ENCODE measurements at regions of chr10 and their contacts with region 1.

Region 1: GRCh38 chr10:73886085-73886529 is 11.8 kb upstream of the CAMK2G start:
- DNase-seq: peak; percentile 88
- H3K4me3 Mint-ChIP-seq: no peak overlapping the region
- H3K27ac Mint-ChIP-seq: peak overlapping the region; percentile 95
- H3K4me1 Mint-ChIP-seq: peaks cover 40% of the 10 kb centered on the region
- H3K27me3 Mint-ChIP-seq: no peaks in the 10 kb centered on the region
- CTCF ChIP-seq: peak; percentile 86

Region 2: DNA sequence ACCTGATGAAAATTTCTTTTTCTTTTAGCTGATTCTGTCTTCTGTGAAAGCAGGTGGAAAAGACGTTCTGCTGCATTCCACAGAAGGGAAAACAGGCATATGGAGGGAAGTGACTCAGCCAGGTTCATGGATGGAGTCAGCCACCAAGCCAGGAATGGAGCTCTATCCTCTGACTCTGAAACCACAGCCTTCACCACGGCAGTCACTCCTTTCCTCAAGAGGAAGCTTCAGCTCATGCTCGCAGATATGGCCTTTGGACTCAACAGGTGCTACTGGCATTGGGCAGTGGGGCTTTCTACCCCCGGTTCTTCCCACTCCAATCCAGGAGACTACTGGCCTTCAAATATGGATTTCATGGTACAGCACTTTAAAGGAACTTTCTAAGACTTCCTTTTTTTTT is 13.3 kb after region 1 on chr10:
- CTCF ChIA-PET with region 1: interaction called, 63 read pairs
- intact Hi-C with region 1: loop called (anchors 1 kb)
- DNase-seq: peak; percentile 86
- H3K4me3 Mint-ChIP-seq: peak overlapping the region; percentile 36
- H3K27ac Mint-ChIP-seq: peak overlapping the region; percentile 96
- H3K4me1 Mint-ChIP-seq: peaks cover 53% of the 10 kb centered on the region
- H3K27me3 Mint-ChIP-seq: no peaks in the 10 kb centered on the region
- CTCF ChIP-seq: no peak

Region 3: GRCh38 chr10:73931767-73932619 is 45.9 kb after region 1 on chr10:
- CTCF ChIA-PET with region 1: interaction called, 38 read pairs
- intact Hi-C with region 1: loop called (anchors 2 kb)
- DNase-seq: peak; percentile 94
- H3K4me3 Mint-ChIP-seq: peak overlapping the region; percentile 20
- H3K27ac Mint-ChIP-seq: peak overlapping the region; percentile 99
- H3K4me1 Mint-ChIP-seq: peaks cover 68% of the 10 kb centered on the region
- H3K27me3 Mint-ChIP-seq: no peaks in the 10 kb centered on the region
- CTCF ChIP-seq: no peak

Region 4: DNA sequence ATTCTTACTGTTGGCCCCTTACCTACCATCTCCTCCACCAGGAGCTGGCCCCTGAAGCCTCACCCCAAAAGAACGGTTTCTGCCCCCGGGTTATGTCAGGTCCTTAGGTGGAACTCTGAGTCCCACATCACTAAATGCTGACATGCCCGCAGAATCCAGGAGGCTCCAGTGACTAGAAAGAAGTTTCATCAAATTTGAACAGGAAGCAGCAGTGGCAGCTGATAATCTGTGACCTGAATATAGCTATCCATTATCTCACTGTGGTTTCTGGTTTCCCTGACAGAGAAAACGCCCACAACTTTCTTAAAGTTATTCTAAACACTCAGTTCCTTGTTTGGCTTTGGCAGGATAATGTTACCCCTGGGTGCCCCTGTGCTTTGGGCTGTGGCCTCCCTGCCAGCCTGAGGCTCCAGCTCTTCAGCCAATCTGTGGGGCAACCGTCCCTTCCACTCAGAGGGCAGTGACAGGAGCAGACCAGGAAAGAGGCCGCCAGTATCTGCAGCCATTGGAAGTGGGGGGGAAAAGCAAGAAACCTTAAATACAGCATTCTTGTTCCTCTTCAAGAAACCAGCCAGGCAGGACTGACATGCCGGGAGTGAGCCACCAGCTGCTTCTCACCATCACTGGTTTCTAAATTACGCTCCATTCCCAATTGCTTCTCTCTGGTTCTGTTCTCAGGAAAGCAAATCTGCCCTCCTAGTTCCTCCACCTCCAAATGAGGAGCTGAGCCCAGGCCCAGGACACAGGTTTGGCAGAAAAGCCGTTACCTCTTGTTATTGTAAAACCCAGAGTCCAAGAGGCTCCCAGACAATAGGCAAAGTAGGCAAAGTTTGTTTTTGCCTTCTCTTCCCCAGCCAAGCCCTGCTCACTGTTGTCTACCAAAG is 70.6 kb after region 1 on chr10:
- CTCF ChIA-PET with region 1: interaction called, 27 read pairs
- intact Hi-C with region 1: no loop called
- DNase-seq: peak; percentile 77
- H3K4me3 Mint-ChIP-seq: peak overlapping the region; percentile 23
- H3K27ac Mint-ChIP-seq: peak overlapping the region; percentile 48
- H3K4me1 Mint-ChIP-seq: peaks cover 39% of the 10 kb centered on the region
- H3K27me3 Mint-ChIP-seq: no peaks in the 10 kb centered on the region
- CTCF ChIP-seq: no peak

Region 5: GRCh38 chr10:74058658-74059057 is 172.6 kb after region 1 on chr10:
- CTCF ChIA-PET with region 1: interaction called, 10 read pairs
- intact Hi-C with region 1: loop called (anchors 5 kb)
- DNase-seq: peak; percentile 46
- H3K4me3 Mint-ChIP-seq: peak overlapping the region; percentile 19
- H3K27ac Mint-ChIP-seq: peak overlapping the region; percentile 94
- H3K4me1 Mint-ChIP-seq: peaks cover 62% of the 10 kb centered on the region
- H3K27me3 Mint-ChIP-seq: no peaks in the 10 kb centered on the region
- CTCF ChIP-seq: no peak

Region 6: GRCh38 chr10:74081192-74081803 is 195.2 kb after region 1 on chr10:
- CTCF ChIA-PET with region 1: interaction called, 13 read pairs
- intact Hi-C with region 1: loop called (anchors 1 kb)
- DNase-seq: peak; percentile 69
- H3K4me3 Mint-ChIP-seq: no peak overlapping the region
- H3K27ac Mint-ChIP-seq: peak overlapping the region; percentile 95
- H3K4me1 Mint-ChIP-seq: peaks cover 58% of the 10 kb centered on the region
- H3K27me3 Mint-ChIP-seq: no peaks in the 10 kb centered on the region
- CTCF ChIP-seq: peak; percentile 72

Measured in Calu3 (cell line).